Cardiac septum (tissue), 1 donor: ENCODE measurements at regions of chr4 and their contacts with region 1.

Region 1: GRCh38 chr4:13413729-13414437 is 70.3 kb downstream of the RAB28 start:
- DNase-seq: no peak

Region 2: DNA sequence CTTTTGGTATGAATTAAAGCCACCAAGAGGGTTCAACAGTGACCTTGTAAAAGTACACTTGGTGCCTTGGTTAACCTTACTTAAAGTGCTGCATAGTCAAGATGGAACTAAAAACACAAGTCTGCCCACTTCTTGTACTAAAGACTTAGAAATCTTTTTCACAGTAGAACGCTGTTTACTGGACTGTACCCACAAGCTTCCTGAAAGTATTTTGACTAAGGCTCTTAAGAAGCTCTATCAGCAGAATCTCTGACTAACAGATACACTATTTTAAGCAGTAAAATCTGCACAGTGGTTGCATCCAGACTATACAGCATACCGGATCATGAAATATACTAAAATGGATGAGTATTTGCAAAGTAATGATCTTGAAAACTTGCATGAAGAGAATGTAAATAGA is 63.0 kb after region 1 on chr4:
- intact Hi-C with region 1: loop called (anchors 2 kb)
- DNase-seq: no peak